ENCODE measurements at regions of chr10 and their contacts with region 1.

Region 1: DNA sequence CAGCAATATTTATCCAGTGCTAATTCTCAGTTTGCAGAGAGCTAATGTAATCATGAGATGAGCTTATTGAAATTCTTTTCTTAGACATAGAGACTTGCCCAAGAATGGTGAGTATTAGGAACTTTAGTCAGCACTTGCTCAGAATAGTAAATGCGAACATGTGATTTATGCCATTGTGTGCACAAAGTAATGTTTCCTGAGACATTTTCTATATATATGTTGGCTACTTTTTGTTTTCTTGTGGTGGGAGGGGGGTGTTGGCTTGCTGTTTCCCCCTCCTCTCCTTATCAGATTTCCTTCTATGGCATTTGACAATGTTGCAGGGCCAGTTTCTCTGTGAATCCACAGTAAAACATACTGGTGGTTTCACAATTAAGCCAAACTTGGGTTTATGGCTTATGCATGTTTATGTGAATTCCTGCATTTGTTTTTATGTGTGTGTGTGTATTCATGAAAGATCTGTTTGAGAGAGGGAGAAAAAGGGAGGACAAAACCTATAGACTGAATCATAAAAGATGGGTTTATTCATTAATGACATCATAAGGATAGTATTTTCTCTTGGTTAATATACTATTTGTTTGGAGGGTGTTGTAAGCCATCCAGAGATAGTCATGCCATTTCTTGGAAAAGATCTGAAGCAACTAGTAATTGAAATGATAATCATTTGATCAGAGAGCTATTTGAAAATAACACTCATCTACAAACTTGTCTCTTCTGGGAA is 36.3 kb downstream of the ARID5B start:
- DNase-seq: peak; percentile 70
- H3K4me3 Mint-ChIP-seq: peak overlapping the region; percentile 55
- H3K27ac Mint-ChIP-seq: peak overlapping the region; percentile 92
- H3K4me1 Mint-ChIP-seq: peaks cover 75% of the 10 kb centered on the region
- H3K27me3 Mint-ChIP-seq: no peaks in the 10 kb centered on the region

Region 2: DNA sequence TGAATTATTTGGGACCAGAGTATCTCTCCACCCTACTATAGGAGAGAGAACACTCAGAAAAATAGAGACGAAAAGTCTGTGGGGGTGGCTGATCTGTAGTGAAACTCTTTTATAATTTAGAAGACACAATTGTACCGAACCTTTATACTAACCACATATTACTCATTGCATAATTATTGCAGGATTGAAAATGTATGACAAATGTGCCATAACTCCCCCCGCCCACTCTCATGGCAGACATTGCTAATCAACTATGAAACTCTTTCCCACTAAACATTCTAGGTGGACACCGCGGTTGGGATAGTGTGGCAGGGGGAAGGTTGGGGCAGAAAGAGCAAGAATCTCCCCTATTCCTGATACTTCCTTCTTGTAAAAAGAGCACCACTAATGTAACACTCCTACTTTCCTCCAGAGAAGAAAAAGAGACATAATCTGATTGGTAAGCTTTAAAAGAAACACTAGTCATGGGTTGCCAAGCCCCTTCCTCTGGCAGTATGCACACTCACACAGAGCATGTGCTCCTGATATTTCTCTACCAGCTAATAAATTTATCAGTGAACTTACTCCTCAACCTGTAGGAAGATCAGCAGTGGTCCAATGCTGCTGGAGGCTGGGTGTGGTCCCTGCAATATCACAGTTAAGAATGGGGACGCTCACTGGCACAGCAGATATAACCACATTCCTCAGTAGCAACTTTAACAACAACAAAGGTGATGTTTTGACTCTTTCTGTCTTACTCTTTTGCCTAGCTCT is 55.0 kb before region 1 on chr10:
- intact Hi-C with region 1: no loop called
- DNase-seq: no peak
- H3K4me3 Mint-ChIP-seq: peak overlapping the region; percentile 32
- H3K27ac Mint-ChIP-seq: peak overlapping the region; percentile 79
- H3K4me1 Mint-ChIP-seq: peaks cover 16% of the 10 kb centered on the region
- H3K27me3 Mint-ChIP-seq: peaks cover 2% of the 10 kb centered on the region

Region 3: GRCh38 chr10:61923213-61923949 is 14.4 kb before region 1 on chr10:
- intact Hi-C with region 1: loop called (anchors 2 kb)
- DNase-seq: no peak
- H3K4me3 Mint-ChIP-seq: no peak overlapping the region
- H3K27ac Mint-ChIP-seq: peak overlapping the region; percentile 35
- H3K4me1 Mint-ChIP-seq: peaks cover 44% of the 10 kb centered on the region
- H3K27me3 Mint-ChIP-seq: no peaks in the 10 kb centered on the region

Region 4: DNA sequence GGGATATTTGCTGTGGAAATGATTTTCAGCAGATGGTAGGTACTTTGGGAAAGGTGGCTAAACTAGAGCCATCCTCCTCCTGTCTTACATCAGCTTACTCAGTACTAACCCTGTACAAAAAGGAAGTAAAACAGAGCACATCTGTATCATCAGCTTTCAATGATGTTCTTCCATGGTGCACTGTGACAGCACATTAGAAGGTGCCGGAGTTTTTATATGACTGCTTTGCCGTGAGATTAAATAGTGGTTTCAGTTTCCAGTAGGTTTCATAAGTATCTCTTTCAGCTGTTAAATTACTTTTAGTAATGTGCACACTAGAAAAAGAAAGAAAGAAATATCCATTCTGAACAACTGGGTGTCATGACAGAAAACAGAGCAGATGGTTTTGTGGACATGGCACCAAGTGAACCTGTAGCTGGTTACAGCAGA is 50.2 kb after region 1 on chr10:
- intact Hi-C with region 1: loop called (anchors 1 kb)
- DNase-seq: peak; percentile 84
- H3K4me3 Mint-ChIP-seq: peak overlapping the region; percentile 72
- H3K27ac Mint-ChIP-seq: peak overlapping the region; percentile 96
- H3K4me1 Mint-ChIP-seq: peaks cover 71% of the 10 kb centered on the region
- H3K27me3 Mint-ChIP-seq: no peaks in the 10 kb centered on the region

Region 5: GRCh38 chr10:61992671-61993668 is 55.2 kb after region 1 on chr10:
- intact Hi-C with region 1: loop called (anchors 1 kb)
- DNase-seq: peak; percentile 91
- H3K4me3 Mint-ChIP-seq: peak overlapping the region; percentile 77
- H3K27ac Mint-ChIP-seq: peak overlapping the region; percentile 93
- H3K4me1 Mint-ChIP-seq: peaks cover 65% of the 10 kb centered on the region
- H3K27me3 Mint-ChIP-seq: no peaks in the 10 kb centered on the region